ENCODE measurements at regions of chr13 and their contacts with region 1.

Region 1: DNA sequence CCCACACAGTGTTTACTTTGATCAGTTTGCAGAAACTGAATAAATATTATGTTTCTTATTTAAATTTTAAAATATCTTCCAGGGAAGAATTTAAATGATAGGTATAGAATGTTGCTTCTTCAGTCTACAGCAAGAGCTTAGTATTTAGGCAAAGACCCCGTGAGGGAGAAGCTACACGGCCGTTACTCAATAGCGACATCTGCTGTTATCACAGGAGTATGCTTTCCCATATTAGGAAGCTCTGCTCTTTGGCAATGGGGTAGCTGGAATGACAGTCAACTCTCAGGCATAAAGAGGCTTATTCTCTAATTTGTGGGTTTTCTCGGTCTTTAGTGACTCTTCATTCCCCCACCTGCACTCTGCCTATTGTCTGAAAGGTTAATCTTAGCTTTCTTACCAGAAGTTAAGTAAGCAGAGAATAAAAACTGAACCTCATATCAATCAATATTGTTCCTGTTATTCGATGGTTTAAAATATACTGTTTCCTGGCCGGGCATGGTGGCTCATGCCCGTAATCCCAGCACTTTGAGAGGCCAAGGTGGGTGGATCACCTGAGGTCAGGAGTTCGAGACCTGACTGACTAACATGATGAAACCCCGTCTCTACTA is 13.2 kb upstream of the LHFPL6 start:
- DNase-seq: peak; percentile 27
- H3K4me3 ChIP-seq: no peak overlapping the region
- H3K27ac ChIP-seq: no peak overlapping the region
- H3K4me1 ChIP-seq: no peaks in the 10 kb centered on the region
- H3K27me3 ChIP-seq: peaks cover 2% of the 10 kb centered on the region
- CTCF ChIP-seq: peak; percentile 92 to 97

Region 2: DNA sequence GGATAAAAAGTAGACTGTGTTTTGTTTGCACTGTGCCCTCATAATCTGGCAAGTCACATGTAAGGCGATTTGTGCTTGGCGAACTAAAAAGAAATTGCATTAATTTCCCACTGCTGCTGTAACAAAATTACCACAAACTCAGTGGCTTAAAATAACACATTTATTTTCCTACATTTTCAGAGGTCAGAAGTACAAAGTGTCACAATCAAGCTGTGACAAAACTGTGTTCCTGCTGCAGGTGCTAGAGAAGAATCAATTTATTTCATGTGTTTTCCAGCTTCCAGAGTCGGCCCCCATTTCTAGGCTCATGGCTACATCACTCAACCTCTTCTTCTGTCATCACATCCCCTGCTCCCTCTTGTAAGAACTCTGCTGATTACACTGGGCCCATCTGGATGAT is 1425.2 kb before region 1 on chr13:
- CTCF ChIA-PET with region 1: no interaction called
- dilution Hi-C with region 1: no loop called
- in situ Hi-C with region 1: no loop called
- intact Hi-C with region 1: no loop called
- DNase-seq: no peak
- H3K4me3 ChIP-seq: no peak overlapping the region
- H3K27ac ChIP-seq: no peak overlapping the region
- H3K4me1 ChIP-seq: no peaks in the 10 kb centered on the region
- H3K27me3 ChIP-seq: no peaks in the 10 kb centered on the region
- CTCF ChIP-seq: no peak

Region 3: DNA sequence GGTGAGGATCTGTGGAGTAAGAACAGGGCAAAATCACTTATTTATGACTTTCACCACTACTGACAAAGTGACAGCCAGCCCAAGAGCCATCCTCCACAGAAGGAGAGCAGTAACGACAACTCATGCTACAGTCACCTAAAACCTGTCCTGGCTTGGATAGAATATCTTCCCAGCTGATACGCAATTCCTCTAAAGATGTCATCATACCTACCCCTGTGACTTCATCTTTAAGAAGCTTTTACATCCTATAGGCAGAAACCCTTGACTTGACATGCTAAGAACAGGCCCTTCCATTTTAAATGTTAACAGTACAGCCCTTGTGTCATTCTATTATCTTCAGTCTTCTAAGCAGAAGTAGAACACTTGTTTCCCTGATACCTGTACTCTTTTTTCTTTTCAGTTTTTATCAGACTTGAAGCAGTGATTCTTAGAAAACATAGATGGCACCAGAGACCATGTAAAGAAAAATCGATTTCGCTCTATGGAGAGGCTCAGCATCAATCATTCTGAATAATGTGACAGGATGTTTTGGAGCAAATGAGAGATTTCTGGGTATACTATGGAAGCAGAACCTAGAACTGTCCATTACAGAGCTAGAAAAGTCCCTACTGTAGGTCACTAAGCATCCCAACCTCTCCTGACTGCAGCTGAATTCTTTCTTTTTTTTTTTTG is 645.7 kb before region 1 on chr13:
- CTCF ChIA-PET with region 1: no interaction called
- dilution Hi-C with region 1: no loop called
- in situ Hi-C with region 1: no loop called
- intact Hi-C with region 1: loop called (anchors 5 kb)
- DNase-seq: no peak
- H3K4me3 ChIP-seq: no peak overlapping the region
- H3K27ac ChIP-seq: no peak overlapping the region
- H3K4me1 ChIP-seq: no peaks in the 10 kb centered on the region
- H3K27me3 ChIP-seq: no peaks in the 10 kb centered on the region
- CTCF ChIP-seq: peak in 1 of 2 donors; percentile 3

Region 4: GRCh38 chr13:39144941-39145533 is 471.2 kb before region 1 on chr13:
- CTCF ChIA-PET with region 1: no interaction called
- dilution Hi-C with region 1: no loop called
- in situ Hi-C with region 1: no loop called
- intact Hi-C with region 1: loop called (anchors 1 kb)
- DNase-seq: peak; percentile 54
- H3K4me3 ChIP-seq: no peak overlapping the region
- H3K27ac ChIP-seq: no peak overlapping the region
- H3K4me1 ChIP-seq: peaks cover 8% of the 10 kb centered on the region
- H3K27me3 ChIP-seq: peaks cover 27% of the 10 kb centered on the region
- CTCF ChIP-seq: peak; percentile 72 to 90

Region 5: DNA sequence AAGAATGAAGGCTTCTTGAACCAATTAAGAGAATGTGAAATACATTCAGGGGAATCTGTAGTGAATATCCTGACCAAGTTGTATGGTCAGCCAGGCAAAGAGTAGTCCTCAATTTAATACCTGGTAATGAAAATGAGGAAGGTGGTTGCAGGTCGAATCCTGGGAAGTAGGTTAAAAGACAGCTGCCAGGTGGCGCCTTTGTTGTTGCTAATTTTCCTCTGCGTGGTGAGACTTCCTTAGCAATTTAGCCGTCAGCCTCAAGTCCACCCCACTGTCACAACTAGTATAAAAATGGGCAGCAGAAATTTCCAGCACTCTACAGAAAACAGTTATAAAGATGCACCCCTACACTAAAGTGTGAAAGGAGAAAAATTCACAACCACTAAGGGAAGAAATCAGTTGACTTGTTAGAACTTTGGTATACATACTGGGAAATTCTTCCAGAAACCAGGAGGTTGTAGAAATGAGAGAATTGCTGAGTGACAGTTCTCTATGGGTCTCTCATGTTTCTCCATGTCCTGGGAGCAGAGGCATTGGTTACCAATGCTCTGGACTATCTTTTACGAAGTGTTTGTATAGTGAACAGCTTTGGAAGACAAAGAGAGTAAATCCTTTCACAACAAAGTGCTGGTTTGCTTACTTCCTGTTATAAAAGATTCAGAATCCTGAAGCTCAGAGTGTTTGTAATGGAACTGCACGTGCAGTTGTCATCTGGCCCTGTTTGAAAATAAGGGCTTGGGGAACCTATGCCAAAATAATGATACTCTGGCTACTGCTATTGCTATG is 342.0 kb before region 1 on chr13:
- CTCF ChIA-PET with region 1: interaction called, 4 read pairs
- dilution Hi-C with region 1: no loop called
- in situ Hi-C with region 1: loop called in 1 of 2 experiments (anchors 10 kb)
- intact Hi-C with region 1: loop called (anchors 1 kb)
- DNase-seq: no peak
- H3K4me3 ChIP-seq: no peak overlapping the region
- H3K27ac ChIP-seq: no peak overlapping the region
- H3K4me1 ChIP-seq: no peaks in the 10 kb centered on the region
- H3K27me3 ChIP-seq: peaks cover 3% of the 10 kb centered on the region
- CTCF ChIP-seq: peak; percentile 15 to 56

Region 6: GRCh38 chr13:39577838-39578491 is 38.2 kb before region 1 on chr13:
- CTCF ChIA-PET with region 1: no interaction called
- dilution Hi-C with region 1: no loop called
- in situ Hi-C with region 1: no loop called
- intact Hi-C with region 1: no loop called
- DNase-seq: no peak
- H3K4me3 ChIP-seq: no peak overlapping the region
- H3K27ac ChIP-seq: no peak overlapping the region
- H3K4me1 ChIP-seq: no peaks in the 10 kb centered on the region
- H3K27me3 ChIP-seq: no peaks in the 10 kb centered on the region
- CTCF ChIP-seq: no peak

Region 7: GRCh38 chr13:39676315-39676876 is 60.2 kb after region 1 on chr13:
- CTCF ChIA-PET with region 1: no interaction called
- dilution Hi-C with region 1: no loop called
- in situ Hi-C with region 1: no loop called
- intact Hi-C with region 1: loop called (anchors 2 kb)
- DNase-seq: peak; percentile 21
- H3K4me3 ChIP-seq: no peak overlapping the region
- H3K27ac ChIP-seq: no peak overlapping the region
- H3K4me1 ChIP-seq: no peaks in the 10 kb centered on the region
- H3K27me3 ChIP-seq: no peaks in the 10 kb centered on the region
- CTCF ChIP-seq: peak; percentile 35 to 42

Region 8: DNA sequence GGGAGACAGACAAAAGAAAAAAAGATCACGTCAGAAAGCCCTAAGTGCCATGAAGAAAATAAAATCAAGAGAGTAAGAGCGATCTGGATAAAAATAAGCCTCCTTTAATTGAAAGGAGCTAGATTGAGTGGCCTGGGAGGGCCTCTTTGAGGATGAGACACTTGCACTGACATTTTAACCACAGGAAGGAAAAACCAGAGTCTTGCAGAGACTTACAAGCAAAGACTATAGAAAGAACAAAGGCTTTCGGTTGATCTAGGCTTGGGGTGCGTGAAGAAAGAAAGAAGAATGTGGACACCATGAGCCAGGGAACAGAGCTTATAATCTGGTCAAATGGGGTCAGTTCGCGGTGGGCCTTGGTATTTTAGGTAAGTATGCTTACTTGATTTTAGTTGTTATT is 382.0 kb after region 1 on chr13:
- CTCF ChIA-PET with region 1: no interaction called
- dilution Hi-C with region 1: no loop called
- in situ Hi-C with region 1: no loop called
- intact Hi-C with region 1: no loop called
- DNase-seq: no peak
- H3K4me3 ChIP-seq: no peak overlapping the region
- H3K27ac ChIP-seq: no peak overlapping the region
- H3K4me1 ChIP-seq: no peaks in the 10 kb centered on the region
- H3K27me3 ChIP-seq: no peaks in the 10 kb centered on the region
- CTCF ChIP-seq: no peak